Activated CD4-positive, alpha-beta memory T cell treated with anti-CD3 and anti-CD28 coated beads, Interleukin-2, amount 10 ng/mL, durations not matched to agents 7 days and 5 days (primary cell): ENCODE measurements at regions of chr1 and their contacts with region 1.

Region 1: GRCh38 chr1:224151117-224151516 is 31.9 kb upstream of the DEGS1 start:
- DNase-seq: no peak
- H3K4me3 Mint-ChIP-seq: no peak overlapping the region
- H3K27ac Mint-ChIP-seq: no peak overlapping the region
- H3K4me1 Mint-ChIP-seq: peaks cover 14% of the 10 kb centered on the region
- H3K27me3 Mint-ChIP-seq: no peaks in the 10 kb centered on the region

Region 2: DNA sequence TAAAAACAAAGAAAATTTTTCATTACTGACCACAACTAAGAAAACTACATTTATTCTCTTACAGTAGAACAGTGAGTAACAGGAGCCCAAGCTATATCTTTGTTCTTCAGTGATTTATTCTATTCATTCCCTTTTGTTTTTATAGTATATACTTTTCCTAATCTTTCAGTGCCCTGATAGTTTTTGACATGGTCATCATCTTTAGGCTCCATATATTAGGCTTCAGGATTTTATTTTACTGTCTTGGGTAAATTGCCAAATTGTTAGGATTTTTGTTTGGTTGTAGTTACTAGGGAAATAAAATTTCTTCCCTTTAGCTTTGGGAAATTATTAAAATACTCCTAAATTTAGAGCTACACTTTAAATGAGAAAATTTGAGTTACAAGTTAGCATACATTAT is 26.9 kb before region 1 on chr1:
- CTCF ChIA-PET with region 1: no interaction called
- POLR2A ChIA-PET with region 1: no interaction called
- DNase-seq: no peak
- H3K4me3 Mint-ChIP-seq: no peak overlapping the region
- H3K27ac Mint-ChIP-seq: no peak overlapping the region
- H3K4me1 Mint-ChIP-seq: peaks cover 13% of the 10 kb centered on the region
- H3K27me3 Mint-ChIP-seq: no peaks in the 10 kb centered on the region

Region 3: GRCh38 chr1:224168859-224169380 is 17.8 kb after region 1 on chr1:
- CTCF ChIA-PET with region 1: interaction called, 10 read pairs
- POLR2A ChIA-PET with region 1: no interaction called
- DNase-seq: no peak
- H3K4me3 Mint-ChIP-seq: peak overlapping the region; percentile 1
- H3K27ac Mint-ChIP-seq: peak overlapping the region; percentile 63
- H3K4me1 Mint-ChIP-seq: peaks cover 34% of the 10 kb centered on the region
- H3K27me3 Mint-ChIP-seq: peaks cover 2% of the 10 kb centered on the region